ENCODE measurements at regions of chr6 and their contacts with region 1.

Region 1: GRCh38 chr6:43228951-43229802 is at the start of gene DNPH1:
- DNase-seq: peak; percentile 78
- H3K4me3 Mint-ChIP-seq: peak within 1 kb of the TSS; percentile 92
- H3K27ac Mint-ChIP-seq: peak within 1 kb of the TSS; percentile 89
- H3K4me1 Mint-ChIP-seq: peaks cover 47% of the 10 kb centered on the region
- H3K27me3 Mint-ChIP-seq: peaks cover 22% of the 10 kb centered on the region
- total RNA-seq, gene DNPH1: 65.8 and 71.6 TPM in 2 replicates

Region 2: DNA sequence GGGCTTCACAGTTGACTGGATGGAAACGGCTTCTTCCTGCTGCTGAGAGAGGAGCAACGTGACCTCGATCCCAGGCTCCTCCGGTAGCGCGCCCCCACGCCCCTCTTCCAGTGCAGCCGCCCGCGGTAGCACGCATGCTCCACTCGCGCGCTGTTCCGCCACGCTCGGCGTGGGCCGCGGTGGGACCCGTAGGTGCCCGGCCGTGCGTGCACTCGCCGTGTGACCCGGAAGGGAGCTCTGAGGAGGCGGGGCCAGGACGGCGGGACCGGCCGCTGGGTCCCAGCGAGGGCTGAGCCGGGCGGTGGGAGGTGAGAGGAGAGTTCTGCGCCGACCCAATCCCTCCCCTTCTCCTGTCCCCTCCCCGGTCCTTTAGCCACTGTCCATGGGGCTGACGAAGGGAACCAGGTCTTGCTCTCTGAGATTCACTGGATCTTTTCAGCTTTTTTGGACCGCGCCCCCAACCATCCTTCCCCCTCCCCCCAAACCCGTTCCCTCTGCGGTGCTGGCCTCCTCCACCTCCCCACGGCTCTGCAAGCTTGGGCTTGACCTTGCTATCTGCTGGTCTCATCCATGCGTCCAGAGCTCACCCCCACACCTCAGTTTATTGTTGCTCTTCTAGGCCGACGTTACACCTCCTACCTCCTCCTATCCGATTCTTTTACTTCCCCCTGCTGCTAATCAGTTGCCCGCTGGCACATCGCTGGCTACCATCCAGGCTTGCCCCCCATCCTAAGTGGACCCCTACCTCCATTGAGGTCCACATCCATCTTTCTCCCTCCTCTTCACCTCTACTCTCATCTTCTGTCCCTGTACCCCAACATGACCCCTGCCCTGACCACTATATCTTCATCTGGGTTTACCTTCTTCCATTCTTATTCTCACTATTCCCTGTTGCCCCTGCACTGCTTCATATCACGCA is 47.0 kb before region 1 on chr6 and contains the start of gene CUL9:
- intact Hi-C with region 1: loop called (anchors 1 kb)
- DNase-seq: peak; percentile 83
- H3K4me3 Mint-ChIP-seq: peak within 1 kb of the TSS; percentile 95
- H3K27ac Mint-ChIP-seq: peak within 1 kb of the TSS; percentile 91
- H3K4me1 Mint-ChIP-seq: peaks cover 48% of the 10 kb centered on the region
- H3K27me3 Mint-ChIP-seq: no peaks in the 10 kb centered on the region
- total RNA-seq, gene CUL9: 38.9 and 42.2 TPM in 2 replicates

Region 3: DNA sequence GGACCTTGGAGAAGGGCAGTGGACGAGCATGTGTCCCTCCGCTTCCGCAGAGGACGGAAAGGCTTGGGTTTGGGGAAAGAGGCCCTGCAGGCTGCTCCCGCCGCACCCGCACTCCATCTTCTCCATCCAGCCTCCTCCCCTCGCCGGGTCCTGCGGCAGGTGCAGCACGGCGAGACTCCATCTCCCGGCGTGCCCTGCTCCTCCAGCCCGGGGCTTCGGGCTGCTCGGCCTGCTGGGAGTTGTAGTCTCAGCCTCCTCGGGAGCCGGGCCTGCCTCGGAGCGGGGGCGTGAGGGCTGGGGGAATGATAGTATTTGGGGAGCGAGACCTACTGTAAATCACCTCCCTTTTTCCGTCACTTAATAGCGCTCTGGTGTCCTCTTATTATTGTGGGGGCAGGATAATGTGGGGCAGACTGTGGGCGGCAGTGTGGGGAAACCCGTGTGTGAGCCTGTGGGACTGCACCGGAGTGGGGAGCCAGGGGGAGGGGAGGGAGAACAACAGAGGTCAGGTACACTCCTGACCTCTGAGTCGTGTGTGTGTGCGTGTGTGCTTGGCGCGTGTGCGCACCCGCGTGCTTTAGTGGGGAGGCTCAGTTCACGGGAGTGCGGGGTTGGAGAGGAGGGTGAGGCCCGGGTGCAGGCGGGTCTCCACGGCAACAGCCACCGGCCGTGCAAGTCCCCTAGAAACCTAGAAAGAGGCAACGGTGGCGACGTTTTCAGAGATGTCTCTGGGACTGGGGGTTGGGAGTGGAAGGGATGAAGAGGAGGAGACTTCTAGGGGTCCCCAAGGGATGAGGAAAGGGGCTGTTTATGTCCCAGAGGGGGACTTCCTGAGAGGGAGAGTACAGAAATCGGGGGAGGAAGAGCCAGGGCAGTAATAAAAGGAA is 18.2 kb after region 1 on chr6:
- intact Hi-C with region 1: loop called (anchors 1 kb)
- DNase-seq: peak; percentile 77
- H3K4me3 Mint-ChIP-seq: peak overlapping the region; percentile 77
- H3K27ac Mint-ChIP-seq: peak overlapping the region; percentile 85
- H3K4me1 Mint-ChIP-seq: peaks cover 21% of the 10 kb centered on the region
- H3K27me3 Mint-ChIP-seq: peaks cover 17% of the 10 kb centered on the region

Region 4: DNA sequence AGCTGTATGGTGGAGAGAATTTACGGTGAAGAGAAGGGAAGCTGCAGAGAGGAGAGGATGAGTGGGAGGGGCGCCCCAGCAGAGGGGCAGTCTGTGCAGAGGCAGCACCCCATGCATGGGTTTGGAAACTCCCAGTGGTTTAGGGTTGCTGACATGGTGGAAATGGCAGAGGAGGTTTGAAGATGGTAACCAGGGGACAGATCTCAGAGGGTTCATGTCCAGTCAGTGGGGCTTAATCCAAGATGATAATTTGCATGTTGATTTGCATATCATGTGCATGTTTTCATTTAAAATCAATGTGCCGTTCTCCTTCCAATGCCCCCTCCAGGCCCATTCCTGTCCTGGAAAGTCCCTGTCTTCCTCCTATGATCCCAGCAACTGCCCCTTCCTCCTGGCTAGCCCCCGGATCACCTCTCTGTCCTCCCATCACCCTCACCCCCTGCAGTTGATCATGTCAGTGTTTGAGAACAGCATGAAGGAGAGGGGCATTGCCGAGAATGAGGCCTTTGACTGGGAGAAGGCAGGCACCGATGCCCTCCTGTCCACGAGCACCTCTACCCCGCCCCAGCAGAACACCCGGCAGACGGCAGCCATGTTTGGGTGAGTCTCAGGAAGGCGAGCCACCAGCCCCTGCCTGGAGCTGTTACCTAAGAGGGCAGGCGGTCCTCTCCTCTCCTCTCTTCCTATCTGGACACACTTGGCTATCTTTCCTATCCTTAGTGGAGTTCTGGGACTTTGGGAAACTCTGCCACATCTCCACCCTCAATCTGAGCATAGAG is 28.4 kb after region 1 on chr6:
- intact Hi-C with region 1: loop called (anchors 1 kb)
- DNase-seq: no peak
- H3K4me3 Mint-ChIP-seq: peak overlapping the region; percentile 61
- H3K27ac Mint-ChIP-seq: peak overlapping the region; percentile 77
- H3K4me1 Mint-ChIP-seq: peaks cover 36% of the 10 kb centered on the region
- H3K27me3 Mint-ChIP-seq: peaks cover 8% of the 10 kb centered on the region